ENCODE measurements at regions of chr17 and their contacts with region 1.

Region 1: GRCh38 chr17:43994272-43995149 is 9.9 kb upstream of the NAGS start:
- H3K4me3 ChIP-seq: peak overlapping the region; percentile 14
- H3K27ac ChIP-seq: no peak overlapping the region
- H3K4me1 ChIP-seq: no peaks in the 10 kb centered on the region
- CTCF ChIP-seq: peak; percentile 97

Region 2: GRCh38 chr17:43907425-43907981 is 87.0 kb before region 1 on chr17 and contains the start of gene MPP2:
- CTCF ChIA-PET with region 1: interaction called, 22 read pairs
- POLR2A ChIA-PET with region 1: interaction called, 3 read pairs
- H3K4me3 ChIP-seq: peak within 1 kb of the TSS; percentile 47
- H3K27ac ChIP-seq: peak within 1 kb of the TSS; percentile 51; the same call in 1 of the 2 replicates
- H3K4me1 ChIP-seq: peaks cover 12% of the 10 kb centered on the region; the same call in 1 of the 2 replicates
- CTCF ChIP-seq: 0 out of 2 replicates have a peak, but pooled peaks have one; percentile 62

Region 3: DNA sequence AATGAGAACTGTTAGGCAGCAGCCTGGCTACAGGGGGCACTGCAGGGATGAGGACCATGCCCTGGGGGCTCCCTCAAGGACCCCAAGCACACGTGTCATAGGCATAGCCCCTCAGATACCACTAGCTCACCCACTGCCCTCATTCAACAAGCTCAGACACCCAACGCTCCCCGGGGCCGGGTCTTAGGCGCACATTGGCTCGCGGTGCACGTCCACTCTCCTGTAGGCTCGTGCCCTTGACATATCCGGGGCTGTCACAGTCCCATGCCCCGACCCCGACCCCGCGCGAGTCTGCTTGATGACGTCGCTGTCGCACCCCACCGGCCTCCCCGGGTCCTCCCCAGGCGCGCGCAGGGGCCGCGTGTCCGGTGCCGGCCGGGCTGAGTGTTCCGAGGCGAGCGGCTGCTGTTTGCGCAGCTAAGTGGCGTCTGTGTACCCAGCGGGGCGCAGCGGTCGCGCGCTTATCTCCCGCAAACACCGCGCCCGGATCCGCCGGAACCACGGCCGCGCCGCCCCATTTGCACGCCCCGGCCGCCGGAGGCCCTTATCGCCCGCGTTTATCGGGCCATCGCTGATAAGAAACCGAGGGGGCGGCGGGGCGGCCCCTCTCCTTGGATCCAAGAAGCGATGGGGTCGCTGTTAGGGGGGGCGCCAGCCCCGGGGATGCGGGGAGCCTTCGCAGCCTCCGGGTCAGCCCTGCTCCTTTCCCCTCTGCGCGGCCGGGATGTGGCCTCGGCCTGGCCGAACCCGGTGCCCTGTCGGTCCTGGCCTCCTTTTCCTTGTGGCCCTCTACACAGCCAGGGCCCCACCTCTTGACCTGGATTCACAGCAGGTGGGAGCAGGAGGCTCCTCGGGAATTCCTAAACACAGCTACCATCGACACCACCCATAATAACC is 10.7 kb before region 1 on chr17:
- CTCF ChIA-PET with region 1: interaction called, 19 read pairs
- POLR2A ChIA-PET with region 1: no interaction called
- H3K4me3 ChIP-seq: peak overlapping the region; percentile 31
- H3K27ac ChIP-seq: no peak overlapping the region; the same call in 1 of the 2 replicates
- H3K4me1 ChIP-seq: no peaks in the 10 kb centered on the region; the same call in 1 of the 2 replicates
- CTCF ChIP-seq: peak; percentile 65

Region 4: GRCh38 chr17:44006598-44007345 is 12.3 kb after region 1 on chr17:
- CTCF ChIA-PET with region 1: interaction called, 10 read pairs
- POLR2A ChIA-PET with region 1: interaction called, 4 read pairs
- H3K4me3 ChIP-seq: peak overlapping the region; percentile 72
- H3K27ac ChIP-seq: peak overlapping the region; percentile 71
- H3K4me1 ChIP-seq: peaks cover 9% of the 10 kb centered on the region
- CTCF ChIP-seq: peak; percentile 61

Region 5: DNA sequence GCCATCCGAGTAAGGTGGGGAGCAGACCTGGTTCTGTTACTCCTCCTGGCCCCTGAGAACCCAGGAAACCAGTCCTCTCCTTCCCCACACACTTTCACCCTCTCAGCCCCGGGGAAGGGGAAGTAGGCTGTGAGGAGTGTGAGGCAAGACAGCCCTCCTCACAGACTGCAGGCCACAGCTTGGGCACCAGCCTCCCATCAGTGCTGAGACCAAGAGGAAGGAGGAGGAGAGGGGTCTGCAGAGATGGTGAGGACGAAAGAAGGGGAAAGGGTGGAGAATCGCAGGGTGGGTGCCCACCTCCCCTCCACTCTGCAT is 83.0 kb after region 1 on chr17:
- CTCF ChIA-PET with region 1: no interaction called
- POLR2A ChIA-PET with region 1: no interaction called
- H3K4me3 ChIP-seq: no peak overlapping the region
- H3K27ac ChIP-seq: peak overlapping the region; percentile 40; the same call in 1 of the 2 replicates
- H3K4me1 ChIP-seq: peaks cover 6% of the 10 kb centered on the region
- CTCF ChIP-seq: no peak

Region 6: DNA sequence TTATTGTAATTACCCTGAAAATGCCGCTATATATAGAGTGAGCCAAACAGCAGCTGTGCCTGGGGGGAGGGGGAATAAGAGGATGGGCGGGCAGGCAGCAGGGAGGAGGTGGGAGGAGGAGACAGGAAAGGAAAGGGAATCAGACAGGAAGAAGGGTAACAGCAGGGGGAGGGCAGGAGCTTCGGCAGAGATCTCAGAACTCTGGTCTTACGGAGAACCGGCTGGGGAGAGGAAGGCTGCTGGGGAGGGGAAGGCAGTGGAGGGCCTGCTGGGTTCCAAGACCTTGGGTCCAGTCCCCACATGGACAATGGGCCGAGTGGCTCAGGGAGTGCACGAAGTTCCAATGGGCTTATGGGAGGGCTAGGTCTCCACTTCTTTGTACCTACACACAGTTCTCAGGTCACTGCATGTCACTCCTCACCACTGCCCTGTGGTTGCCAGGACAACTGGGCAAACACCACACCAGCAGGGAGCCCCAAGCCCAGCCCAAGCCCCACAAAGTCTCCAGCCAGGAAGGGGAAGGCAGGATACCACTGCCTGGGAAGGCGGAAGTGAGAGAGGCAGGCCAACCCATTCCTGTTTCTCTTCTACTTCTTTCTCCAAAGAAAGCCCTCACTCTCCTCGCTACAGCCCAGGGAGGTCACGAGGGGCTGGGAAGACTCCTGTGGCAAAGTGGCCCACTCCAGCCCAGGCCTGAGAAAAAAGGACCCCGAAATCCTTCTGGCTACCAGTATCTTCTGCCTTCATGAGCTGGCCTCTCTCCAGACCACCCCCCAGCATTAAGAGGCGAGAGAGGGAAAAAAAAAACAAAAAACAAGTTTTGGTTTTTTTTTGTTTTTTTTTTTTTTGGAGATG is 101.4 kb after region 1 on chr17:
- CTCF ChIA-PET with region 1: no interaction called
- POLR2A ChIA-PET with region 1: no interaction called
- H3K4me3 ChIP-seq: peak overlapping the region; percentile 33
- H3K27ac ChIP-seq: peak overlapping the region; percentile 73
- H3K4me1 ChIP-seq: peaks cover 10% of the 10 kb centered on the region; the same call in 1 of the 2 replicates
- CTCF ChIP-seq: peak; percentile 84

Region 7: GRCh38 chr17:44187131-44187899 is 192.8 kb after region 1 on chr17:
- CTCF ChIA-PET with region 1: no interaction called
- POLR2A ChIA-PET with region 1: no interaction called
- H3K4me3 ChIP-seq: peak overlapping the region; percentile 77
- H3K27ac ChIP-seq: peak overlapping the region; percentile 63
- H3K4me1 ChIP-seq: peaks cover 3% of the 10 kb centered on the region
- CTCF ChIP-seq: no peak

Measured in HEK293 (cell line).